Activated CD4-positive, alpha-beta T cell treated with anti-CD3 and anti-CD28 coated beads for 36 hours (primary cell): ENCODE measurements at regions of chr17 and their contacts with region 1.

Region 1: DNA sequence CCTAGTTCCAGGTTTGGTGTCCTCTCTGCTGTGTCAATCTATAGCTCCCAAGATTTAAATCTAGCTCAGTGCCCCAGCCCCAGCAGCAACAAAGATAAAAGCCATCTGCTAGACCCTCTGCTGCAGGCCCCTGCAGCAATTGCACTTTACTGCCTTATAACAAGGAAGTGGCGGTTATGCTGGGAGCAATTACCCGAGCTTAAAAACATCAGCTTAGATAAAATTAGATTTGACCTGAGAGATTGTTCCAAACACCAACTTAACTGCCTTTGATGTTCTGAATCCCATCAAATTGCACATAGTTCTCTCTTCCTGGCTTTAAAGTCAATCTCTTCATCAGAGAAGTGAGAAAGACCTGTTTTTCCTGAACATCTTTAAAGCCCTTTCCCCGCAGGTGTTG is 62.4 kb upstream of the SHISA6 start:
- DNase-seq: no peak
- ATAC-seq: no peak
- H3K4me3 Mint-ChIP-seq: no peak overlapping the region
- H3K27ac Mint-ChIP-seq: no peak overlapping the region
- H3K4me1 Mint-ChIP-seq: no peaks in the 10 kb centered on the region
- H3K27me3 Mint-ChIP-seq: no peaks in the 10 kb centered on the region

Region 2: DNA sequence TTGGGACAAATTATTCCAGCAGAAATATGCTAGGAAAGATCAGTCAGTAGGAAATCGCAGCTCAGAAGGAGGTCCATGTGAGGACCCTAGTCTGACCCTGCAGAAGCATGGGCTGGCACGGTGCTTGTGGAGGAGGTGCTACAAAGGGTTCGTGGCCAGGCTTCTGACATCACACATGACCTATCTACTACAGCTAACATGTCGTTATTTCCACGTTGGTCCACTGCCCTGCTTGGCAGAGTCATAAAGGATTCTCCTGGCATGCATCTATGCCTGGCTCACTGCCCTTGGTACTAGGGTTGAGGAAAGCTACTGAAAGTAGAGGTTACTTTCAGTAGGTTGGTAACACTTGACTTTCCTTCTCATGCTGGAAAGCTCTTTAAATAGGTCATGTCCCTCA is 55.7 kb before region 1 on chr17:
- CTCF ChIA-PET with region 1: no interaction called
- POLR2A ChIA-PET with region 1: no interaction called
- intact Hi-C with region 1: loop called in 1 of 2 experiments (anchors 10 kb)
- DNase-seq: no peak
- ATAC-seq: no peak
- H3K4me3 Mint-ChIP-seq: no peak overlapping the region
- H3K27ac Mint-ChIP-seq: no peak overlapping the region
- H3K4me1 Mint-ChIP-seq: no peaks in the 10 kb centered on the region
- H3K27me3 Mint-ChIP-seq: no peaks in the 10 kb centered on the region

Region 3: GRCh38 chr17:11212792-11213191 is 34.2 kb after region 1 on chr17:
- CTCF ChIA-PET with region 1: no interaction called
- POLR2A ChIA-PET with region 1: no interaction called
- intact Hi-C with region 1: no loop called
- DNase-seq: no peak
- ATAC-seq: no peak
- H3K4me3 Mint-ChIP-seq: no peak overlapping the region
- H3K27ac Mint-ChIP-seq: no peak overlapping the region
- H3K4me1 Mint-ChIP-seq: no peaks in the 10 kb centered on the region
- H3K27me3 Mint-ChIP-seq: no peaks in the 10 kb centered on the region

Region 4: GRCh38 chr17:11832401-11833137 is 654.0 kb after region 1 on chr17:
- CTCF ChIA-PET with region 1: no interaction called
- POLR2A ChIA-PET with region 1: no interaction called
- intact Hi-C with region 1: no loop called
- DNase-seq: no peak
- ATAC-seq: no peak
- H3K4me3 Mint-ChIP-seq: no peak overlapping the region
- H3K27ac Mint-ChIP-seq: no peak overlapping the region
- H3K4me1 Mint-ChIP-seq: no peaks in the 10 kb centered on the region
- H3K27me3 Mint-ChIP-seq: no peaks in the 10 kb centered on the region